Naive thymus-derived CD4-positive, alpha-beta T cell (primary cell): ENCODE measurements at regions of chr1 and their contacts with region 1.

Region 1: GRCh38 chr1:116881879-116882520 is 27.7 kb upstream of the PTGFRN start:
- DNase-seq: peak in 3 of 9 donors; percentile 14 to 40 (median 19)
- ATAC-seq: no peak
- H3K4me3 ChIP-seq: no peak overlapping the region
- H3K4me3 Mint-ChIP-seq: no peak overlapping the region
- H3K27ac ChIP-seq: no peak overlapping the region
- H3K27ac Mint-ChIP-seq: peak overlapping the region in 2 of 9 donors; percentile 44 to 60
- H3K4me1 ChIP-seq: peaks cover 11 to 20% of the 10 kb centered on the region in 2 donors
- H3K4me1 Mint-ChIP-seq: peaks cover 0 to 26% (median 0%) of the 10 kb centered on the region in 7 donors
- H3K27me3 ChIP-seq: no peaks in the 10 kb centered on the region
- H3K27me3 Mint-ChIP-seq: no peaks in the 10 kb centered on the region

Region 2: GRCh38 chr1:116826818-116827606 is 55.0 kb before region 1 on chr1:
- CTCF ChIA-PET with region 1: no interaction called
- POLR2A ChIA-PET with region 1: interaction called, 3 read pairs
- intact Hi-C with region 1: loop called in 1 of 2 experiments (anchors 2 kb)
- DNase-seq: peak in 3 of 9 donors; percentile 11 to 64 (median 46)
- ATAC-seq: peak; percentile 59
- H3K4me3 ChIP-seq: no peak overlapping the region
- H3K4me3 Mint-ChIP-seq: peak overlapping the region in 6 of 10 donors; percentile 1 to 76 (median 22)
- H3K27ac ChIP-seq: no peak overlapping the region
- H3K27ac Mint-ChIP-seq: peak overlapping the region; percentile 10 to 94 (median 77)
- H3K4me1 ChIP-seq: peaks cover 10 to 12% of the 10 kb centered on the region in 2 donors
- H3K4me1 Mint-ChIP-seq: peaks cover 11 to 60% (median 25%) of the 10 kb centered on the region in 7 donors
- H3K27me3 ChIP-seq: no peaks in the 10 kb centered on the region
- H3K27me3 Mint-ChIP-seq: peaks cover 0 to 3% (median 0%) of the 10 kb centered on the region in 5 donors

Region 3: GRCh38 chr1:116909510-116910378 is 27.7 kb after region 1 on chr1 and contains the start of gene PTGFRN:
- CTCF ChIA-PET with region 1: interaction called, 4 read pairs
- POLR2A ChIA-PET with region 1: interaction called, 3 read pairs
- intact Hi-C with region 1: loop called in 1 of 2 experiments (anchors 1 kb)
- DNase-seq: peak in 7 of 9 donors; percentile 5 to 45 (median 22)
- ATAC-seq: peak; percentile 62
- H3K4me3 ChIP-seq: peak within 1 kb of the TSS; percentile 68
- H3K4me3 Mint-ChIP-seq: peak within 1 kb of the TSS in 9 of 10 donors; percentile 72 to 91 (median 84)
- H3K27ac ChIP-seq: peak within 1 kb of the TSS; percentile 52
- H3K27ac Mint-ChIP-seq: peak within 1 kb of the TSS; percentile 18 to 82 (median 64)
- H3K4me1 ChIP-seq: peaks cover 0 to 10% of the 10 kb centered on the region in 2 donors
- H3K4me1 Mint-ChIP-seq: peaks cover 0 to 8% (median 6%) of the 10 kb centered on the region in 7 donors
- H3K27me3 ChIP-seq: no peaks in the 10 kb centered on the region
- H3K27me3 Mint-ChIP-seq: peaks cover 0 to 7% (median 0%) of the 10 kb centered on the region in 5 donors
- total RNA-seq, gene PTGFRN: 1.00 to 5.6 (median 1.5) TPM

Region 4: DNA sequence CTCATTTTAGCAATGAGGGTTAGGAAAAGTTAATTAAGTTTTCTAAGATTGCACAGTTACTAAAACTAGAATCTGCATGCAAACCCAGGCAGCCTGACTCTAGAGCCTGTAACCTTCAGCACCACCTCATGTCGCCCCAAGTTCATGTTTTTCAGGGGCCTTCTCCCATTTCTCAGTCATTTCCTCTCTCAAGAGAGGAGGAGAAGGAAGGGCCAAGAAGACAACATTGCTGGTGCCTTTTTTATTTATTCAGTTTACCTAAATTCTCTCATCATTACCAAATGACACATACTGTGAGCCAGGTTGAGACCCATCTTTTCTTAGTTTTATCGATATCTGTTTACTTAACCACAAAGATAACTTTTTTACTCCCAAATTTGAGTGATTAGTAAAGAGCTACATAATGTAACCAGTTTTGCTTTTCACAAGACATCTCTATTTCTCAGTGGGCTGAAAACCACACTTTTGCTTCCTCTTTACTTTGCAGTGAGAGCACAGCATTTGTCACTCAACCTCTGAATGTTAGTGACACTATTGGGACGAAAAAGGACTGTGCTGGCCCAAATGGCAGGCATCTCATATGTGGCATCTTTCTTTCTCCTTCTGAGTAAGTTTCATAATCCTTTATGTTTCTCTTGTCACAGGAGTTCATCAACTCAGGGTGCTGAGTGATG is 119.4 kb after region 1 on chr1 and contains the start of gene CD101:
- CTCF ChIA-PET with region 1: no interaction called
- POLR2A ChIA-PET with region 1: interaction called, 6 read pairs
- intact Hi-C with region 1: loop called in 1 of 2 experiments (anchors 10 kb)
- DNase-seq: peak in 4 of 9 donors; percentile 18 to 39 (median 32)
- ATAC-seq: peak; percentile 72
- H3K4me3 ChIP-seq: peak within 1 kb of the TSS; percentile 17
- H3K4me3 Mint-ChIP-seq: peak within 1 kb of the TSS; percentile 30 to 72 (median 60)
- H3K27ac ChIP-seq: peak within 1 kb of the TSS; percentile 60
- H3K27ac Mint-ChIP-seq: peak within 1 kb of the TSS; percentile 84 to 95 (median 87)
- H3K4me1 ChIP-seq: peaks cover 0 to 48% of the 10 kb centered on the region in 2 donors
- H3K4me1 Mint-ChIP-seq: peaks cover 36 to 72% (median 59%) of the 10 kb centered on the region in 7 donors
- H3K27me3 ChIP-seq: no peaks in the 10 kb centered on the region
- H3K27me3 Mint-ChIP-seq: no peaks in the 10 kb centered on the region
- total RNA-seq, gene CD101: 3.9 to 15.4 (median 10.3) TPM

Region 5: GRCh38 chr1:117121776-117122697 is 240.0 kb after region 1 on chr1:
- CTCF ChIA-PET with region 1: interaction called, 3 read pairs
- POLR2A ChIA-PET with region 1: no interaction called
- intact Hi-C with region 1: loop called in 1 of 2 experiments (anchors 5 kb)
- DNase-seq: peak; percentile 64 to 81 (median 74)
- ATAC-seq: peak; percentile 90
- H3K4me3 ChIP-seq: peak overlapping the region; percentile 97
- H3K4me3 Mint-ChIP-seq: peak overlapping the region; percentile 83 to 90 (median 87)
- H3K27ac ChIP-seq: peak overlapping the region; percentile 61
- H3K27ac Mint-ChIP-seq: peak overlapping the region in 2 of 9 donors; percentile 16 to 53
- H3K4me1 ChIP-seq: peaks cover 0 to 4% of the 10 kb centered on the region in 2 donors
- H3K4me1 Mint-ChIP-seq: peaks cover 0 to 13% (median 4%) of the 10 kb centered on the region in 7 donors
- H3K27me3 ChIP-seq: no peaks in the 10 kb centered on the region
- H3K27me3 Mint-ChIP-seq: peaks cover 5 to 21% (median 6%) of the 10 kb centered on the region in 5 donors